Tibial artery (tissue), 4 donors: ENCODE measurements at regions of chr16 and their contacts with region 1.

Region 1: GRCh38 chr16:47141773-47142485 is 1.8 kb downstream of the NETO2 start:
- DNase-seq: peak; percentile 73 to 82
- H3K4me3 ChIP-seq: peak overlapping the region; percentile 22 to 54
- H3K27ac ChIP-seq: no peak overlapping the region
- H3K4me1 ChIP-seq: peaks cover 0 to 29% (median 22%) of the 10 kb centered on the region in 4 donors
- H3K27me3 ChIP-seq: peaks cover 0 to 23% of the 10 kb centered on the region in 2 donors
- CTCF ChIP-seq: peak; percentile 78 to 86

Region 2: DNA sequence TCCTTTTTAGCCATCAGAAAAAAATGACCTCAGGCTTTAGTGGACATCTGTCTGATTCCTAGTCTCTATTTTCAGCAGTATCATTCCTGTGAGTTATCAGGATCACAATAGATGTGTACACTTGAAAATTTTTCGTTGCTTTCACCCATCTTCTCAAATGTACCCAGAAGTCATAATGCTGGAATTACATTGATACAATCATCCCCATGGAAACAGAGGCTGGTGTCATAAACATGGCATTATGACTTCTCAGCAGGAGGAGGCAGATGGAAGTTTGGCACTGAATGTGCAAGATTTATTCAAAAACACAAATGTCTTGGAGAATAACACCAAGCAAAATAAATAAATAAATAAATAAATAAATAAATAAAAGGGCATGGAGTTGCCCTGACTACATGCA is 611.7 kb after region 1 on chr16:
- intact Hi-C with region 1: no loop called
- DNase-seq: no peak
- H3K4me3 ChIP-seq: no peak overlapping the region
- H3K27ac ChIP-seq: no peak overlapping the region
- H3K4me1 ChIP-seq: no peaks in the 10 kb centered on the region
- H3K27me3 ChIP-seq: no peaks in the 10 kb centered on the region
- CTCF ChIP-seq: no peak

Region 3: GRCh38 chr16:48156790-48157209 is 1014.9 kb after region 1 on chr16:
- intact Hi-C with region 1: loop called (anchors 10 kb)
- DNase-seq: peak; percentile 74 to 81
- H3K4me3 ChIP-seq: no peak overlapping the region
- H3K27ac ChIP-seq: no peak overlapping the region
- H3K4me1 ChIP-seq: peaks cover 0 to 4% (median 0%) of the 10 kb centered on the region in 4 donors
- H3K27me3 ChIP-seq: peaks cover 0 to 26% of the 10 kb centered on the region in 2 donors
- CTCF ChIP-seq: peak; percentile 72 to 88